IMR-90 (cell line): ENCODE measurements at regions of chr5 and their contacts with region 1.

Region 1: GRCh38 chr5:56056875-56057274 is 62.1 kb upstream of the IL6ST start:
- DNase-seq: no peak
- ATAC-seq: no peak
- H3K4me3 ChIP-seq: no peak overlapping the region
- H3K27ac ChIP-seq: no peak overlapping the region
- H3K4me1 ChIP-seq: peaks cover 2% of the 10 kb centered on the region; the same call in 1 of the 2 replicates
- H3K27me3 ChIP-seq: no peaks in the 10 kb centered on the region
- CTCF ChIP-seq: no peak
- POLR2A ChIP-seq: no peak
- RAD21 ChIP-seq: no peak

Region 2: GRCh38 chr5:56112526-56113121 is 55.7 kb after region 1 on chr5:
- CTCF ChIA-PET with region 1: interaction called, 10 read pairs
- POLR2A ChIA-PET with region 1: no interaction called
- dilution Hi-C with region 1: no loop called
- in situ Hi-C with region 1: no loop called
- intact Hi-C with region 1: no loop called
- DNase-seq: peak; percentile 49
- ATAC-seq: peak; percentile 24
- H3K4me3 ChIP-seq: no peak overlapping the region
- H3K27ac ChIP-seq: peak overlapping the region; percentile 76; the same call in 1 of the 2 replicates
- H3K4me1 ChIP-seq: peaks cover 11% of the 10 kb centered on the region
- H3K27me3 ChIP-seq: no peaks in the 10 kb centered on the region
- CTCF ChIP-seq: no peak
- POLR2A ChIP-seq: no peak
- RAD21 ChIP-seq: no peak

Region 3: DNA sequence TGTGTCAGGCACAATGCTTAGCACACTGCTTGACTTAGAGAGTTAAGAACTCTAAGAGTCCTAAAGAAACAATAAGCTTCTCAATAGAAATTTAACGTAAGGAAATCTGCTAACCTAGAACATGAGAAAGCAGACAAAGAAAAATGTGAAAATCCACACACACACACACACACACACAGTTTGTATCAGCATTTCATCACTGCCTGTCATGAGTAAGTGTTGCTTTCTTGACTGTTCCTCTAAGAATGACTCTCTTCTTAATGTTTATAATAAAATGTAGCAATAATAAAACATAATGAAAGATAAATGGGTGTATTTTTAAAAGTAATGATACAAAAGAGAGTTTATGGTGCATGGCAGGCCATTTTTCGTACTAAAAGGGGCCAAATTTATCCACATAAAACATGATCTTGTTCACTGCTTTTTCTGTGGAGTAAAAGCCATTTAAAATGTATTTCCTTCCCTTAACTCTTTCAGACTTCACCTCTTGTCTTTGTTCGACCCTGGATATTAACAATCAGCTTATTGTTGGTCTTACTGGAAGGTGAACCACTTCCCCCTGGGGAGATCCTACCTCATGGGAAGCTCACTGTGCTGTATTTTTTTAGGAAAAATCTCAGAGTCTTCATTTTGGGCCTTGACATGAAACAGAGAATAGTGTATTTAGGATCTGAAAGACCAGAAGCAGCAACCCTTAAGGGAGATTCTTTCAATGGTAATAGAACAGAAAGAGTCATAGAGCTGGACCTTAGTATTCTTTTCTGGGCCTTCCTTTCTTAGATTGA is 283.5 kb after region 1 on chr5:
- CTCF ChIA-PET with region 1: no interaction called
- POLR2A ChIA-PET with region 1: no interaction called
- dilution Hi-C with region 1: no loop called
- in situ Hi-C with region 1: no loop called
- intact Hi-C with region 1: no loop called
- DNase-seq: peak; percentile 63
- ATAC-seq: no peak; the same call in 1 of the 2 replicates
- H3K4me3 ChIP-seq: no peak overlapping the region
- H3K27ac ChIP-seq: peak overlapping the region; percentile 55; the same call in 1 of the 2 replicates
- H3K4me1 ChIP-seq: peaks cover 4% of the 10 kb centered on the region; the same call in 1 of the 2 replicates
- H3K27me3 ChIP-seq: no peaks in the 10 kb centered on the region
- CTCF ChIP-seq: no peak
- POLR2A ChIP-seq: no peak
- RAD21 ChIP-seq: no peak

Region 4: GRCh38 chr5:56625541-56625940 is 568.7 kb after region 1 on chr5:
- CTCF ChIA-PET with region 1: no interaction called
- POLR2A ChIA-PET with region 1: no interaction called
- dilution Hi-C with region 1: no loop called
- in situ Hi-C with region 1: no loop called
- intact Hi-C with region 1: no loop called
- DNase-seq: peak; percentile 96
- ATAC-seq: peak; percentile 85
- H3K4me3 ChIP-seq: no peak overlapping the region
- H3K27ac ChIP-seq: peak overlapping the region; percentile 71; the same call in 1 of the 2 replicates
- H3K4me1 ChIP-seq: peaks cover 1% of the 10 kb centered on the region; the same call in 1 of the 2 replicates
- H3K27me3 ChIP-seq: no peaks in the 10 kb centered on the region
- CTCF ChIP-seq: no peak
- POLR2A ChIP-seq: no peak
- RAD21 ChIP-seq: no peak